CD4-positive, alpha-beta T cell (primary cell): ENCODE measurements at regions of chr15 and their contacts with region 1.

Region 1: GRCh38 chr15:22861161-22861560 is 22.7 kb downstream of the NIPA2 start:
- DNase-seq: no peak
- ATAC-seq: no peak
- H3K4me3 ChIP-seq: no peak overlapping the region
- H3K4me3 Mint-ChIP-seq: no peak overlapping the region
- H3K27ac ChIP-seq: no peak overlapping the region
- H3K27ac Mint-ChIP-seq: no peak overlapping the region
- H3K4me1 ChIP-seq: no peaks in the 10 kb centered on the region
- H3K4me1 Mint-ChIP-seq: peaks cover 6% of the 10 kb centered on the region
- H3K27me3 ChIP-seq: no peaks in the 10 kb centered on the region
- H3K27me3 Mint-ChIP-seq: no peaks in the 10 kb centered on the region
- CTCF ChIP-seq: no peak

Region 2: GRCh38 chr15:22827125-22827524 is 34.0 kb before region 1 on chr15:
- CTCF ChIA-PET with region 1: no interaction called
- POLR2A ChIA-PET with region 1: no interaction called
- intact Hi-C with region 1: loop called in 1 of 2 experiments (anchors 5 kb)
- DNase-seq: no peak
- ATAC-seq: no peak
- H3K4me3 ChIP-seq: no peak overlapping the region
- H3K4me3 Mint-ChIP-seq: no peak overlapping the region
- H3K27ac ChIP-seq: no peak overlapping the region
- H3K27ac Mint-ChIP-seq: no peak overlapping the region
- H3K4me1 ChIP-seq: no peaks in the 10 kb centered on the region
- H3K4me1 Mint-ChIP-seq: no peaks in the 10 kb centered on the region
- H3K27me3 ChIP-seq: no peaks in the 10 kb centered on the region
- H3K27me3 Mint-ChIP-seq: no peaks in the 10 kb centered on the region
- CTCF ChIP-seq: no peak